PC-3 (cell line): ENCODE measurements at regions of chr12 and their contacts with region 1.

Region 1: DNA sequence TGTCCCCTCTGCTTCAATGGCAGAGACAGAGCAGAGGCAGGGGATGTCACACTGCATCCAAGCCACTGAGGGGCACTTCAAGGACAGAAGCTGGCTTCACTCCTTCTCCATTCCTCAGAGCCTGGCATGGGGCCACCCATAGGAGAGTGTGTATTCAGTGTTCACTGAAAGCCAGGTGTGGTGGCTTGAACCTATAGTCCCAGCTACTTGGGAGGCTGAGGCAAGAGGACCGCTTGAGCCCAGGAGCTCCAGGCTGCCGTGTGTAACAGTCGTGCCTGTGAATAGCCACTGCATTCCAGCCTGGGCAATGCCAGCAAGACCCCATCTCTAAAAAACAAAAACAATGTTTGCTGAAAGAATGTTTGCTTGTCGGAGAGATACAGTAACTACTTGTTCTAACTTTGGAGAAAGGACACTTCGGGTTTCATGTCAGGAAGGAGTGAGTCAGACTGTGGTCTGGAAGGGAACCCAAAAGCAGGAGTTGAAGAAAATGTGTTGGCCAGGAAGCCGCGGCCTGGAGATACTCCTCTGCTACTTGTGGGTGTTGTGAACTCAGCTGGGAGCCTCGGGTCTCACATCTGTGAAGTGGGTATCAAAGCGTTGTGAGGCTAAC is 43.4 kb downstream of the ELK3 start:
- DNase-seq: peak; percentile 93
- ATAC-seq: peak; percentile 94
- H3K4me3 ChIP-seq: peak overlapping the region; percentile 31; the same call in 1 of the 2 replicates
- H3K27ac ChIP-seq: peak overlapping the region; percentile 80
- H3K4me1 ChIP-seq: peaks cover 21% of the 10 kb centered on the region
- H3K27me3 ChIP-seq: no peaks in the 10 kb centered on the region
- CTCF ChIP-seq: no peak

Region 2: DNA sequence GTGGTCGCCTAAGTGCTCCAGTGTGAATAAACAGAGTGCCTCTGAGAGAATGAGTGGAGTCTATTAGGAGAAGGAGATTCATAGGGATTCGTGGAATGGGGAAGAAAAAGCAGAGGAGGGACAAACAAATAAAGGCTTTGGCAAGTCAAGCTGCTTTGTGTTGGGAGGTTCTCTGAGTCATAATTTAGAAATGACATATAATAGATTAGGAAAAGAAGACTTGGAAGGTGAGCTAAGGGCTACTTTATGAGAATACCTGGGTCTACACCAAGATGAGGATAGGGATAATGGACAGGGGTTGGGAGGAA is 440.6 kb before region 1 on chr12:
- CTCF ChIA-PET with region 1: no interaction called
- POLR2A ChIA-PET with region 1: interaction called, 15 read pairs
- intact Hi-C with region 1: no loop called
- DNase-seq: peak; percentile 83
- ATAC-seq: peak; percentile 83
- H3K4me3 ChIP-seq: peak overlapping the region; percentile 10; the same call in 1 of the 2 replicates
- H3K27ac ChIP-seq: peak overlapping the region; percentile 92
- H3K4me1 ChIP-seq: peaks cover 54% of the 10 kb centered on the region
- H3K27me3 ChIP-seq: no peaks in the 10 kb centered on the region
- CTCF ChIP-seq: no peak

Region 3: GRCh38 chr12:96258104-96258961 is 20.8 kb after region 1 on chr12:
- CTCF ChIA-PET with region 1: no interaction called
- POLR2A ChIA-PET with region 1: no interaction called
- intact Hi-C with region 1: no loop called
- DNase-seq: no peak
- ATAC-seq: no peak
- H3K4me3 ChIP-seq: no peak overlapping the region
- H3K27ac ChIP-seq: no peak overlapping the region
- H3K4me1 ChIP-seq: no peaks in the 10 kb centered on the region
- H3K27me3 ChIP-seq: no peaks in the 10 kb centered on the region
- CTCF ChIP-seq: no peak